ENCODE measurements at regions of chr10 and their contacts with region 1.

Region 1: DNA sequence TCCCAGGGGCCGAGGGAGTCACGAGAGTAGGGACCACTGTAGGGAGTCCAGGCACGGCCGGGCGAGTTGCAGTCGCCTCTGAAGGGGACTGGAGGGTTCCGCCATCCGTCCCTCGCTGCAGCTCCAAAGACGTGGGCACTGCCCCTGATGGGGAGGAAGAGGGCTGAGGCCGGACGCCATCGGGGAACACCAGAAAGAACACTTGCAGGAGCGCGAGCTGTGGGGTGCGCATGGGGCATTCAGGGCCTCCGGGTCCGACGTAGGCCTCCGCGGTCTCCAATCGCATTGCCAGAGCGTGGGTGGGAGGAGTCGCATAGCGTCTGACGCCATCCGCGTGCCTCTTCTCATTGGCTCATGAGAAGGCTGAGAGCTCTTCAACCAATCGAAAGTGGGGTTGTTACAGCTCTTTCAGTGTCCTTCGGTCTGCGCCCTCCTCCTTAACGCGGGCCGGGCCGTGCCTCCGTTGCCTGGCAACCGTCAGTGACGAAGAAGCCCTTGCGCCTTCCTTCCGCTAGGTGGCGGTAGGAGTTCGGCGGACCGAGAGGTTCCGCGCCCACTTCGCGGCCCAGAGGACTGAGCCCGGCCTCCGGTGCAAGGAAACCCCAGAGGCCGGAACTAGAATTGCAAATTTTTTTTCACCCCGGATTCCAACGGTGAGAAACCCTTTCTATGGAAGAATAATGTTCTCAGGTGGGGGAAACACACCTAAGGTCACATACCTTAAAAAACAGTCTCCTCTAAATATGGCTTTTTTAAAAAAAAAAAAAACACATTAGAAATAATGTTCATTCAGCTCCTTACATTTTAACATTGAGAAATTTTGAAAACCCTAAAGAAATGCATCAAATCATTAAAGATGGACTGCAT is at the start of gene TCTN3:
- DNase-seq: peak; percentile 97 to 99 (median 98)
- H3K4me3 ChIP-seq: peak within 1 kb of the TSS; percentile 73 to 97
- H3K4me3 Mint-ChIP-seq: peak within 1 kb of the TSS; percentile 94 to 98 (median 96)
- H3K27ac ChIP-seq: peak within 1 kb of the TSS; percentile 87
- H3K27ac Mint-ChIP-seq: peak within 1 kb of the TSS; percentile 96 to 99 (median 98)
- H3K4me1 ChIP-seq: peaks cover 29% of the 10 kb centered on the region
- H3K4me1 Mint-ChIP-seq: peaks cover 22 to 52% (median 33%) of the 10 kb centered on the region in 4 donors
- H3K27me3 ChIP-seq: no peaks in the 10 kb centered on the region
- H3K27me3 Mint-ChIP-seq: no peaks in the 10 kb centered on the region
- total RNA-seq, gene TCTN3: 20.5 to 22.2 TPM

Region 2: GRCh38 chr10:93702211-93703001 is 1991.5 kb before region 1 on chr10 and contains the start of gene FRA10AC1:
- CTCF ChIA-PET with region 1: no interaction called
- POLR2A ChIA-PET with region 1: no interaction called
- intact Hi-C with region 1: loop called (anchors 10 kb)
- DNase-seq: peak; percentile 83 to 89 (median 84)
- H3K4me3 ChIP-seq: peak within 1 kb of the TSS; percentile 78 to 100
- H3K4me3 Mint-ChIP-seq: no peak within 1 kb of the TSS
- H3K27ac ChIP-seq: peak within 1 kb of the TSS; percentile 63
- H3K27ac Mint-ChIP-seq: no peak within 1 kb of the TSS
- H3K4me1 ChIP-seq: peaks cover 28% of the 10 kb centered on the region
- H3K4me1 Mint-ChIP-seq: peaks cover 6 to 23% (median 16%) of the 10 kb centered on the region in 4 donors
- H3K27me3 ChIP-seq: no peaks in the 10 kb centered on the region
- H3K27me3 Mint-ChIP-seq: no peaks in the 10 kb centered on the region
- total RNA-seq, gene FRA10AC1: 21.6 to 32.5 TPM

Region 3: DNA sequence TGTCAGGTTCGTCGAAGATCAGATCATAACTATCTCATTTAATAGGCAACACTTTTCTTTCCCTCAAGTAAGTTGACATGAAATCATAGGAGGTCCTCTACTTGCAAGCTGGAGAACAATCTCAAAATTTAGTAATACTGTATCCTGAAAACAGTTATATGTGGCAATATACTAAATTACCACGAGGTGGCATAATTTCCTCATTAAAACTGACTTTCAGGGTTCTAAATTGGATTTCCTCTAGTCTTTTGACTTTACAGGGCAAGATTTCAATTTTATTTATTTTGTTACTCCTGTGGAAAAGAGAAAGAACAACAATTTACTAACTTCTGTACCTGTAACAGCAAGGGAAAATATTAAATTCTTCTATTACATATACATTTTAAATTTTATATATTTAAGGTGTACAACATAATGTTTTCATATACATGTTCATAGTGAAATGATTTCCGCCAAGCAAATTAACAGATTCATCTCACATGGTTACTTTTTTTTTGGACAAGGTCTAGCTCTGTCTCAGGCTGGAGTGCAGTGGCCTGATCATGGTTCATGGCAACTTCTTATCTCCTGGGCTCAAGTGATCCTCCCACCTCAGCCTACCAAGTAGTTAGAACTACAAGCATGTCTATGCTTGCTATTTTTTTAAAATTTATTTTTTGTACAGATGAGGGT is 1063.7 kb before region 1 on chr10:
- CTCF ChIA-PET with region 1: no interaction called
- POLR2A ChIA-PET with region 1: no interaction called
- intact Hi-C with region 1: no loop called
- DNase-seq: no peak
- H3K4me3 ChIP-seq: no peak overlapping the region
- H3K4me3 Mint-ChIP-seq: no peak overlapping the region
- H3K27ac ChIP-seq: no peak overlapping the region
- H3K27ac Mint-ChIP-seq: no peak overlapping the region
- H3K4me1 ChIP-seq: no peaks in the 10 kb centered on the region
- H3K4me1 Mint-ChIP-seq: no peaks in the 10 kb centered on the region
- H3K27me3 ChIP-seq: no peaks in the 10 kb centered on the region
- H3K27me3 Mint-ChIP-seq: peaks cover 0 to 1% of the 10 kb centered on the region in 2 donors

Region 4: DNA sequence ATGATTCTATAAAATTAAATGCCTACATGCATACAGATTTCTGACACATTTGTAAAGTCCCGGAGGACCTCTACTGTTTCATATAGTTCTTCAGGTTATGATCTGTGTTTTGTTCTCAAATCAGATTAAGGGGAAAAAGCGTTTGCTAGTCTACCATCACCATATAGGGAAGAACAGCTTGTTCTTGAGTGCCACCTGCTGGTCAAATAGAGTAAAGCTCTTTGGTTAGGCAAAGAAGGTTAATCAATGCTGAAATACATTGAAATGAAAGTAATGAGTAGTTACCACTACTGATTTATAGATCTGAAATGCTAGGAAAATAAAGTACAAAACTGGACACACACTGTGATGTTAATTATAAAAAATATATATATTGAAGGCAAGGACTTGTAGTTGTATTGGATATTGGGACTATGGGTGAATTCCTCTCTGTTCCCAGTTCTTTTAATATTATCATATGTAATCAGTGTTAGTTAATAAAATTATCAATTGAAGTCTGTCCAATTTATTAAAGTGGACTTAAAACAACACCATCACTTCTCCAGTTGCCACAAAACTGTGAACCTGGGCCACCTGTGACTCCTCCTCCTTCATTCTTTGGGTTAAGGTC is 330.5 kb before region 1 on chr10:
- CTCF ChIA-PET with region 1: no interaction called
- POLR2A ChIA-PET with region 1: no interaction called
- intact Hi-C with region 1: no loop called
- DNase-seq: peak in 4 of 5 donors; percentile 46 to 53 (median 48)
- H3K4me3 ChIP-seq: no peak overlapping the region
- H3K4me3 Mint-ChIP-seq: no peak overlapping the region
- H3K27ac ChIP-seq: no peak overlapping the region
- H3K27ac Mint-ChIP-seq: no peak overlapping the region
- H3K4me1 ChIP-seq: no peaks in the 10 kb centered on the region
- H3K4me1 Mint-ChIP-seq: no peaks in the 10 kb centered on the region
- H3K27me3 ChIP-seq: no peaks in the 10 kb centered on the region
- H3K27me3 Mint-ChIP-seq: peaks cover 7 to 9% of the 10 kb centered on the region in 2 donors

Region 5: DNA sequence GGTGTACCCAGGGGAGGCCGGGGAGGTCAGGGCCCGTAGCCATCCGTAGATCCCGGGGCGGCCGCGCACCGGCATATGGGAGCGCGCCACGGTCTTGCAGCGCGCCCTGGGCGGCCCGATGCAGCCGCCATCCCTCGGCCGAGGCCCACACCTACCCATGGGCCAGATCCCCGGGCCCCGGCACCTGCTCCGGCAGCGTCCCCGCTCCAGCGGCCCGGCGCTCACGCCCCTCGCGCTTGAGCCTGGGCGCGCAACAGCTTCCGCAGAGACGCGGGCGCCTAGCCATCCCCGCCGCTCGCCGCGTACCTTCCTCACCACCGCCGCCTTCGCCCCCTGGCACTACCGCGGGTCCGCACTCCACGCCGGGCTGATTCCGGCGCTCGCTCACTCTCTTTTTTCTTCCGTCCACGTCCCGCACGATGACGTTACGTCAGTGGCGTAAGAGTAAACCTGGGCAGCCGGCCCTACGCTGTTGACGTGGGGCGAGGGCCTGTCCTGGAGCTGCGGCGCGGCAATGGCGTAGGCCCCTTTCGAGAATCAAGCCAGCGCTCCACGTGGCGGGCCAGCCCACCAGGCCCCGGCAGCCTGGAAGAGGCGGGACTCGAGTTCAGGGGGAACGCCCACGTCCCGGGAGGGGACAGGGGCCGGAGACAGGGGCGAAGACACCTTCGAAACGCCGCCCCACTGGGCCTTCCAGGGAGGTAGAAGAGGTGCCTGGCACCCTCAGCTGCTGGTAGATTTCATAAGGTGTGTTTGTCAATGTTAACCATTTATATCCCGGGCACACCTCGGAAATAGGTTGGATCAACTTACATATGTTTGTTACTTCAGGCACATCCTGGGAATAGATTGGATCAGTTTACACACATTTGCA is 37.4 kb before region 1 on chr10 and contains the start of gene ALDH18A1:
- CTCF ChIA-PET with region 1: interaction called, 14 read pairs
- POLR2A ChIA-PET with region 1: interaction called, 14 read pairs
- intact Hi-C with region 1: loop called (anchors 1 kb)
- DNase-seq: peak; percentile 86 to 93 (median 89)
- H3K4me3 ChIP-seq: peak within 1 kb of the TSS; percentile 32 to 74
- H3K4me3 Mint-ChIP-seq: peak within 1 kb of the TSS; percentile 98 to 100 (median 99)
- H3K27ac ChIP-seq: peak within 1 kb of the TSS; percentile 54
- H3K27ac Mint-ChIP-seq: peak within 1 kb of the TSS; percentile 81 to 99 (median 95)
- H3K4me1 ChIP-seq: peaks cover 21% of the 10 kb centered on the region
- H3K4me1 Mint-ChIP-seq: peaks cover 12 to 37% (median 24%) of the 10 kb centered on the region in 4 donors
- H3K27me3 ChIP-seq: no peaks in the 10 kb centered on the region
- H3K27me3 Mint-ChIP-seq: no peaks in the 10 kb centered on the region
- total RNA-seq, gene ALDH18A1: 25.9 to 29.3 TPM

Region 6: DNA sequence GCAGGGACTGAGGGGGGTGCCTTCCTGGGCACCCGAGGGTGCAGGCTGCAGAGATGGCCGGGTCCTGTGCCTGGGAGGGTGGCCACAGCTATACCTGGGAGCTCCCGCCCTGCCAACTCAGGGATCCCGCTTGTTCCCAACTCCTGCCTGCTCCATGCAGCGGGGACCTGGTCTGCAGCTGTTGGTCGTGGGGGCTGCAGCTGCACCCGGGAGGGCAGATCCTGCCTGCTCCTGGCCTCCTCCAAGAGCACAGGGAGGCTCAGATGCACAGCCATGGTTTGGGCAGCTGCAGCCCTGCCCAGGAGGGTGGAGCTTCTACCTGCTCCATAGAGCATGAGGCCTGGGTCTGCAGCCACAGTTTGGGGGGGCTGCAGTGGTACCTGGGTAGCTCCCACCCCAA is 13.1 kb after region 1 on chr10:
- CTCF ChIA-PET with region 1: interaction called, 14 read pairs
- POLR2A ChIA-PET with region 1: interaction called, 3 read pairs
- intact Hi-C with region 1: no loop called
- DNase-seq: no peak
- H3K4me3 ChIP-seq: no peak overlapping the region
- H3K4me3 Mint-ChIP-seq: no peak overlapping the region
- H3K27ac ChIP-seq: no peak overlapping the region
- H3K27ac Mint-ChIP-seq: no peak overlapping the region
- H3K4me1 ChIP-seq: no peaks in the 10 kb centered on the region
- H3K4me1 Mint-ChIP-seq: no peaks in the 10 kb centered on the region
- H3K27me3 ChIP-seq: no peaks in the 10 kb centered on the region
- H3K27me3 Mint-ChIP-seq: no peaks in the 10 kb centered on the region

Region 7: DNA sequence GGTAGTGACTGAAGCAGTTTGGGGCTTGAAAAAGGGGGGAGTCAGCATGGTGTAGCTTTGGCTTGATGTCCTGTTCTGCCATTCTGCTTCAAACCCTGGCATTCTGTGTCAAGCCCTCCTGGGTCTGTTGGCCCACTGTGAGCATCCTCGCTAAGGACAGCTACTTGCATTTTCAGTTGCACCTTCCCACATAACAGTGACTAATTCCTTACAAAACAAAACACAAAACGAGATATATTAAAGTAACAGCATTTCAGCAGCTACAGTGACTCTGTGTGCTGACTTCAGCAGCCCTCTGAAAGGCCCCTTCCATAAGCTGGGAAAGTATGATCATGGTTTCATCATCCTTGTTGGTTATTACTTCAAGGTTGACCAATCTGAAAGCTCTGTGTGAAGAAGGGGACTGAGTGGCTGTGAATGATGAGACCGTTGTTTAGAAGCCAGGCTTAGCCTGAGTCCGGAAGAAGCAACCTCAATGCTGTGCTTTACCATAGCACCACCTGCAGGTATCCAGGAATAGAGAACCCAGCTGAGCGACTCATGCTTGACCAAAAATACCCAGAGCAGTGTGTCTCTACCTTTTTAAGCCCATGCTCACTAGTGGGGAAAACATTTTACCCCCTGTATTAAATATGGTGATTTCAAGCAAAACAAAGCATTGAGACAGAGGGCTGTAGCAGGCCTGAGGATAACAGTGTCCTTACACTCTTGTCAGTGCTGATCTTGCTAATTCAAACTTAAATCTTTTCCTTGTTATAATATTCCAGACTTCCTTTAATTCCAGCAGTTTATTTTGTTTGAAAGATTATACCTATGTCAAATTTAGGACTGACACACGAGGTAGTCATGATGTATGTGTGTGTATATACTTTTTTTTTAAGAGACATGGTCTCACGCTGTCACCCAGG is 171.3 kb after region 1 on chr10:
- CTCF ChIA-PET with region 1: interaction called, 81 read pairs
- POLR2A ChIA-PET with region 1: interaction called, 9 read pairs
- intact Hi-C with region 1: loop called (anchors 1 kb)
- DNase-seq: peak; percentile 14 to 52 (median 41)
- H3K4me3 ChIP-seq: no peak overlapping the region
- H3K4me3 Mint-ChIP-seq: no peak overlapping the region
- H3K27ac ChIP-seq: no peak overlapping the region
- H3K27ac Mint-ChIP-seq: peak overlapping the region in 3 of 7 donors; percentile 61 to 77 (median 68)
- H3K4me1 ChIP-seq: peaks cover 4% of the 10 kb centered on the region
- H3K4me1 Mint-ChIP-seq: peaks cover 5 to 9% (median 8%) of the 10 kb centered on the region in 4 donors
- H3K27me3 ChIP-seq: no peaks in the 10 kb centered on the region
- H3K27me3 Mint-ChIP-seq: no peaks in the 10 kb centered on the region

Region 8: GRCh38 chr10:96017191-96017687 is 323.3 kb after region 1 on chr10:
- CTCF ChIA-PET with region 1: interaction called, 8 read pairs
- POLR2A ChIA-PET with region 1: no interaction called
- intact Hi-C with region 1: loop called (anchors 1 kb)
- DNase-seq: peak; percentile 41 to 53 (median 46)
- H3K4me3 ChIP-seq: no peak overlapping the region
- H3K4me3 Mint-ChIP-seq: no peak overlapping the region
- H3K27ac ChIP-seq: no peak overlapping the region
- H3K27ac Mint-ChIP-seq: no peak overlapping the region
- H3K4me1 ChIP-seq: no peaks in the 10 kb centered on the region
- H3K4me1 Mint-ChIP-seq: peaks cover 0 to 4% (median 3%) of the 10 kb centered on the region in 4 donors
- H3K27me3 ChIP-seq: no peaks in the 10 kb centered on the region
- H3K27me3 Mint-ChIP-seq: peaks cover 4 to 5% of the 10 kb centered on the region in 2 donors

Region 9: DNA sequence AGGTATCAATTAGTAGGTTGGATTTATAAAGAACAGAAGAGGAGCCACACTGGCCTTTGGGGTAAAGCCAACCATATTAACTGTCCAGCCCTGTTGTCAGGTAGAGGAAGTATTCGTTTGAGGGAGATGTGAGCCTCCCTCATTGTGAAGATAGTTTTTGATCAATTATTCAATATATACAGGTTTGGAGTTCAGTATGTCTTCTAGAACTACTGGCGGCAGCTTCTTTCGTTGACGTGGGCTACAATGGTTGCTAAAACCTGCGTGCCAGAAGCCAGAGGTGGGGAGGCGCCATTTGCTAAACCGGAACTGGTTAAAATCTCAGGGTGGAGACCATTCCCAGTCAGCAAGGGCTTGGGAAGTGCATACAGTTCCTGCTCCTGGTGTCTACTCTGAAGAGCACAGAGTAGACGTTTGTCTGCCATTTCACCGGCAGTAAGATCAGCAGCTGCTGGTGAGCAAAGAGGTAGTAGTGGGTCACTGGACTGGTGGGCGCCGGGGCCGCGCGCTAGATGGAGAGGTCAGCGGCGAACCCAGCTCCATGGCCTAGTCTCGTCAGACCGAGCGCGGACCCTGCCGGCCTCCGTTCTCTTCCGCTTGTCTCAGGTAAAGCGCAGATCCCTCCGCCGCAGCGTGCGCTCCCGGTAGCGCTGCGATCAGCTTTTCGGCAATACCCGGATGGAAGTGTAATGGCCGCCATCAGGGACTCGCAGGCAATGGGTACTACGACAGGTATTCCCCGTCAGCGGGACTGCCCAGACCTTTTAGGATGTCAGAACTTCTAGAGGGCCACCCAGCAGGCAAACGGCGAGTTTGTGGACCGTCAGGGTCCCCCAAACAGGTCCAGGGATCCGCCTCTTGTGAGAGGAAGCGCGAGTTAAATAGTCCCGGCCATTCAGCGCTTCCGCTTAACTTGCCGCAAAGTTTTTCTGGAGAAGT is 435.8 kb after region 1 on chr10 and contains the start of gene ZNF518A:
- CTCF ChIA-PET with region 1: interaction called, 3 read pairs
- POLR2A ChIA-PET with region 1: interaction called, 26 read pairs
- intact Hi-C with region 1: loop called (anchors 1 kb)
- DNase-seq: peak; percentile 90 to 95 (median 94)
- H3K4me3 ChIP-seq: peak within 1 kb of the TSS; percentile 96 to 99
- H3K4me3 Mint-ChIP-seq: peak within 1 kb of the TSS; percentile 90 to 98 (median 96)
- H3K27ac ChIP-seq: peak within 1 kb of the TSS; percentile 97
- H3K27ac Mint-ChIP-seq: peak within 1 kb of the TSS; percentile 99 to 100 (median 99)
- H3K4me1 ChIP-seq: peaks cover 17% of the 10 kb centered on the region
- H3K4me1 Mint-ChIP-seq: peaks cover 11 to 23% (median 17%) of the 10 kb centered on the region in 4 donors
- H3K27me3 ChIP-seq: peaks cover 9% of the 10 kb centered on the region
- H3K27me3 Mint-ChIP-seq: peaks cover 20 to 31% of the 10 kb centered on the region in 2 donors
- total RNA-seq, gene ZNF518A: 22.4 to 24.0 TPM